IMR-90 (cell line): ENCODE measurements at regions of chr3 and their contacts with region 1.

Region 1: GRCh38 chr3:155334914-155335723 is 41.6 kb upstream of the STRIT1 start:
- DNase-seq: no peak
- ATAC-seq: no peak
- H3K4me3 ChIP-seq: no peak overlapping the region
- H3K27ac ChIP-seq: no peak overlapping the region
- H3K4me1 ChIP-seq: no peaks in the 10 kb centered on the region
- H3K27me3 ChIP-seq: peaks cover 1% of the 10 kb centered on the region; the same call in 1 of the 2 replicates
- CTCF ChIP-seq: no peak
- POLR2A ChIP-seq: no peak
- RAD21 ChIP-seq: no peak

Region 2: GRCh38 chr3:154552338-154552737 is 782.8 kb before region 1 on chr3:
- CTCF ChIA-PET with region 1: no interaction called
- POLR2A ChIA-PET with region 1: no interaction called
- dilution Hi-C with region 1: no loop called
- in situ Hi-C with region 1: loop called (anchors 25 kb)
- intact Hi-C with region 1: no loop called
- DNase-seq: no peak
- ATAC-seq: no peak
- H3K4me3 ChIP-seq: no peak overlapping the region
- H3K27ac ChIP-seq: no peak overlapping the region
- H3K4me1 ChIP-seq: no peaks in the 10 kb centered on the region
- H3K27me3 ChIP-seq: no peaks in the 10 kb centered on the region
- CTCF ChIP-seq: no peak
- POLR2A ChIP-seq: no peak
- RAD21 ChIP-seq: no peak